CD8-positive, alpha-beta T cell (primary cell): ENCODE measurements at regions of chr6 and their contacts with region 1.

Region 1: GRCh38 chr6:111823831-111824607 is 49.2 kb downstream of the FYN start:
- DNase-seq: peak in 3 of 9 experiments; percentile 40 to 81 (median 65)
- ATAC-seq: peak; percentile 82
- H3K4me3 ChIP-seq: no peak overlapping the region
- H3K4me3 Mint-ChIP-seq: peak overlapping the region; percentile 20
- H3K27ac ChIP-seq: peak overlapping the region in 1 of 2 experiments; percentile 71
- H3K27ac Mint-ChIP-seq: peak overlapping the region; percentile 92
- H3K4me1 ChIP-seq: peaks cover 48% of the 10 kb centered on the region
- H3K4me1 Mint-ChIP-seq: peaks cover 84% of the 10 kb centered on the region
- H3K27me3 ChIP-seq: no peaks in the 10 kb centered on the region
- H3K27me3 Mint-ChIP-seq: no peaks in the 10 kb centered on the region
- CTCF ChIP-seq: no peak

Region 2: DNA sequence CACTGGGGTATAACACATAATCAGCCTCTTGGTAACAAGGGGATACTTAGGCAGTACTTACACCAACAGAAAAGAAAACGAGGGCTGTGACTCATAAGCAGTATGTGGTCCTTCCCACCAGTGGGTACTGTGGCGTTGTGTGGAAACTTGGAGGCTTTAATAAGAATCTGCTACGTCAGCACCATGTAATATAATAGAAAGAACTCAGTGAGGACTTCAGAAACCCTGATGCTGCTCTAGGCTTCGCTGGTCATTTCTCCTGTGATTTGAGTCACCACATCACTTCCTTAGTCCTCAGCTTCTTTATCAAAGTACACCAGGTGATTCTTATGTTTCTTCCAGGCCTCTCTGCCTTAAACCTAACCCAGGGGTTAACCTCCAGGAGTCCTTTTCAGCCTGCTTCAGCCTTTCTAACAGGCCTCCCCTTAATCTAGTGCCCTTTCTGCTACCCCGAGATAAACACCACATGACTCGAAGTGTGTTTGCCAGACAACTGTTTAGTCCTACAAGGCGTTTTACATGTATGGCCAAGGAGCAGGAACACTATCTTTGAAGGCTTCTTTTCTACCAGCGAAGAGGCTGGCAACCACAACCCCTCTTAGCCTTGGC is 19.3 kb before region 1 on chr6:
- CTCF ChIA-PET with region 1: interaction called, 5 read pairs
- POLR2A ChIA-PET with region 1: interaction called, 15 read pairs
- intact Hi-C with region 1: no loop called
- DNase-seq: peak; percentile 27 to 92 (median 62)
- ATAC-seq: peak; percentile 73
- H3K4me3 ChIP-seq: no peak overlapping the region
- H3K4me3 Mint-ChIP-seq: peak overlapping the region; percentile 60
- H3K27ac ChIP-seq: peak overlapping the region; percentile 16 to 84
- H3K27ac Mint-ChIP-seq: peak overlapping the region; percentile 97
- H3K4me1 ChIP-seq: peaks cover 70% of the 10 kb centered on the region
- H3K4me1 Mint-ChIP-seq: peaks cover 95% of the 10 kb centered on the region
- H3K27me3 ChIP-seq: no peaks in the 10 kb centered on the region
- H3K27me3 Mint-ChIP-seq: no peaks in the 10 kb centered on the region
- CTCF ChIP-seq: peak; percentile 53

Region 3: GRCh38 chr6:111810294-111811131 is 13.5 kb before region 1 on chr6:
- CTCF ChIA-PET with region 1: interaction called, 5 read pairs
- POLR2A ChIA-PET with region 1: interaction called, 15 read pairs
- intact Hi-C with region 1: loop called in 1 of 2 experiments (anchors 2 kb)
- DNase-seq: peak in 2 of 9 experiments; percentile 34 to 65
- ATAC-seq: peak; percentile 10
- H3K4me3 ChIP-seq: no peak overlapping the region
- H3K4me3 Mint-ChIP-seq: peak overlapping the region; percentile 59
- H3K27ac ChIP-seq: peak overlapping the region in 1 of 2 experiments; percentile 34
- H3K27ac Mint-ChIP-seq: peak overlapping the region; percentile 92
- H3K4me1 ChIP-seq: peaks cover 90% of the 10 kb centered on the region
- H3K4me1 Mint-ChIP-seq: peaks cover 90% of the 10 kb centered on the region
- H3K27me3 ChIP-seq: no peaks in the 10 kb centered on the region
- H3K27me3 Mint-ChIP-seq: no peaks in the 10 kb centered on the region
- CTCF ChIP-seq: no peak